Activated CD4-positive, alpha-beta T cell treated with anti-CD3 and anti-CD28 coated beads for 36 hours (primary cell): ENCODE measurements at regions of chr12 and their contacts with region 1.

Region 1: DNA sequence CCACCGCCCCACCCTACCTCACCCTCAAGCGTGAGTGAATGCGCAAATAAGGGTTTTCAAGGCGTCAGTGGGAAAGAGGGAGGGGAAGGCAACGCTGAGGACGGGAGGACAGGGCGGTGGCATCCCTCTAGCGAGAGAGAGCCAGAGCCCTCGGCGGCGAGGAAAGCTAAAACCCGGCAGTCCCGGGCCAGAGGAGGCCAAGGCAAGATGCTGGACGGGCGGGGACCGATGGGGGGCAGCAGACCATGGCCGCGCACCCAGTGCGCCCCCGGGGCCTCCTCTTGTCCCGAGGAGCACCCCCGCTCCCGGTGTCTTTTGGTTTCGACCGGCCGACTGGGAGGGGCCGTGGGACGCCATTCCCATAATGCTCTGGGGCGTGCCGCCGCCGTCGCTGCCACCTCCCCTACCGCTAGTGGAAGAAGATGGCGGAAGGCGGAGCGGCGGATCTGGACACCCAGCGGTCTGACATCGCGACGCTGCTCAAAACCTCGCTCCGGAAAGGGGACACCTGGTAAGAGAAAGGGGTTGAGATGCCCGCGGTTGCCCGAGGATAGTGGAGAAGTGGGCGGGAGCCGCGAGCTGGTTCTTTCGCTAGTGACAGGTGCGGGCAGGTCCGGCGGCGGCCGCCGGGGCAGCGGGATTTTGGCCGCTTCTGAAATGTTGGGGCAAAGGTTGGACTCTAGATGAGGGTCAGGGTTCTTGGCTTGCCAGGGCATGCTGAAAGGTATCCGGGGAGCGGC is at the start of gene USP15:
- DNase-seq: peak; percentile 97
- ATAC-seq: peak; percentile 67
- H3K4me3 Mint-ChIP-seq: peak within 1 kb of the TSS; percentile 87
- H3K27ac Mint-ChIP-seq: peak within 1 kb of the TSS; percentile 100
- H3K4me1 Mint-ChIP-seq: peaks cover 58% of the 10 kb centered on the region
- H3K27me3 Mint-ChIP-seq: no peaks in the 10 kb centered on the region
- total RNA-seq, gene USP15: 87.2 to 98.0 TPM

Region 2: DNA sequence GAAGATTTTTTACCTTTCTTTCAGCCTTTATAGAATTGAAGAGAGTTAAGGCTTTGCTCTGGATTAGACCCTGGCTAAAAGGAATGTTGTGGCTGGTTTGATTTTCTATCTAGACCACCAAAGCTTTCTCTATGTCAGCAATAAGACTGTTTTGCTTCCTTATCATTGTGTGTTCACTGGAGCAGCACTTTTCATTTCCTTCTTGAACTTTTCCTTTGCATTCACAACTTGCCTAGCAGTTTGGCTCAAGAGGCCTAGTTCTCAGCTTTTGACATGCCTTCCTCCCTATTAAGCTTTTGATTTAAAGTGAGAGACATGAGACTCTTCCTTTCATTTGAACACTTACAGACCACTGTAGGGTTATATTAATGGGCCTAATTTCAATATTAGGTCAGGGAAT is 64.0 kb before region 1 on chr12:
- CTCF ChIA-PET with region 1: no interaction called
- POLR2A ChIA-PET with region 1: no interaction called
- intact Hi-C with region 1: no loop called
- DNase-seq: no peak
- ATAC-seq: no peak
- H3K4me3 Mint-ChIP-seq: no peak overlapping the region
- H3K27ac Mint-ChIP-seq: no peak overlapping the region
- H3K4me1 Mint-ChIP-seq: peaks cover 12% of the 10 kb centered on the region
- H3K27me3 Mint-ChIP-seq: peaks cover 16% of the 10 kb centered on the region

Region 3: GRCh38 chr12:62279058-62279457 is 18.9 kb after region 1 on chr12:
- CTCF ChIA-PET with region 1: interaction called, 6 read pairs
- POLR2A ChIA-PET with region 1: no interaction called
- intact Hi-C with region 1: loop called (anchors 2 kb)
- DNase-seq: no peak
- ATAC-seq: peak; percentile 61
- H3K4me3 Mint-ChIP-seq: no peak overlapping the region
- H3K27ac Mint-ChIP-seq: peak overlapping the region; percentile 62
- H3K4me1 Mint-ChIP-seq: peaks cover 78% of the 10 kb centered on the region
- H3K27me3 Mint-ChIP-seq: no peaks in the 10 kb centered on the region

Region 4: DNA sequence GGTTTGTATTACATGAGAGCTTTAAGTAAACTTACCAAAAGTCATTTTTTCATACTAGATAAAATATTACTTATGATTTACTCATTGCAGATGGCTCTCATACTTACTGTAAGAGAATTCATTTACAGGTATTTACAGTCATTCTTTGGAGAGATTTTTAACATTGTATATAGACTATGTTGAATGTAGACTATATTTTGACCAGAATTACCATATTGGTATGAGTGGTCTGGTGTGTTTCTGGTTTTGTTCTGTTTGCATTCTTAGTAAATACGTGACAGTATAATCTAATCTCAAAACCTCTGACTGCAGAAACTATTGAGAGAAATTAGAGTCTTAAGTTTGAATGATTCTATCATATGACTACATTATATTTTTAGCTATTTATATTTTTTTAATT is 91.2 kb after region 1 on chr12:
- CTCF ChIA-PET with region 1: no interaction called
- POLR2A ChIA-PET with region 1: no interaction called
- intact Hi-C with region 1: loop called in 1 of 2 experiments (anchors 2 kb)
- DNase-seq: no peak
- ATAC-seq: peak; percentile 64
- H3K4me3 Mint-ChIP-seq: no peak overlapping the region
- H3K27ac Mint-ChIP-seq: no peak overlapping the region
- H3K4me1 Mint-ChIP-seq: peaks cover 19% of the 10 kb centered on the region
- H3K27me3 Mint-ChIP-seq: no peaks in the 10 kb centered on the region

Region 5: GRCh38 chr12:62363506-62363905 is 103.3 kb after region 1 on chr12:
- CTCF ChIA-PET with region 1: no interaction called
- POLR2A ChIA-PET with region 1: no interaction called
- intact Hi-C with region 1: no loop called
- DNase-seq: no peak
- ATAC-seq: no peak
- H3K4me3 Mint-ChIP-seq: no peak overlapping the region
- H3K27ac Mint-ChIP-seq: no peak overlapping the region
- H3K4me1 Mint-ChIP-seq: peaks cover 23% of the 10 kb centered on the region
- H3K27me3 Mint-ChIP-seq: no peaks in the 10 kb centered on the region

Region 6: DNA sequence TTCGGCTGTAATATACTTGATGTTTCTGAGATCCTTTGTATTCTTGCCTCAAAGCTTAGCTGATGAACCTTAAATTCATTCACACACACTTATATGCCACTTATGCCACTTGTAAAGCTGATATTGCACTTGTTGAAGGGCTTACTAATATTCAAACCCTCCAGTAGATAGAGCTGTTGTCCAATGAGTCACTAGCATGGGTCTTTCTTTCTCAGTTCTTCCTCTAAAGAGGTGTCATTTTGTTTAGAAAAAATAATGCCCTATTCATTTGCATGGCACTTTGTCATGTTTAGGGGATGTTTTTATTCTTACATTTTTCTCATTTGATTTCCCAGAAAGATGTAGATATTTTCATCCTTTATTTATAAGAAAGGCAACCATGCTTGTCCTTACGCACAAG is 262.8 kb after region 1 on chr12:
- CTCF ChIA-PET with region 1: no interaction called
- POLR2A ChIA-PET with region 1: no interaction called
- intact Hi-C with region 1: loop called (anchors 5 to 10 kb)
- DNase-seq: no peak
- ATAC-seq: peak; percentile 91
- H3K4me3 Mint-ChIP-seq: no peak overlapping the region
- H3K27ac Mint-ChIP-seq: no peak overlapping the region
- H3K4me1 Mint-ChIP-seq: peaks cover 49% of the 10 kb centered on the region
- H3K27me3 Mint-ChIP-seq: no peaks in the 10 kb centered on the region

Region 7: DNA sequence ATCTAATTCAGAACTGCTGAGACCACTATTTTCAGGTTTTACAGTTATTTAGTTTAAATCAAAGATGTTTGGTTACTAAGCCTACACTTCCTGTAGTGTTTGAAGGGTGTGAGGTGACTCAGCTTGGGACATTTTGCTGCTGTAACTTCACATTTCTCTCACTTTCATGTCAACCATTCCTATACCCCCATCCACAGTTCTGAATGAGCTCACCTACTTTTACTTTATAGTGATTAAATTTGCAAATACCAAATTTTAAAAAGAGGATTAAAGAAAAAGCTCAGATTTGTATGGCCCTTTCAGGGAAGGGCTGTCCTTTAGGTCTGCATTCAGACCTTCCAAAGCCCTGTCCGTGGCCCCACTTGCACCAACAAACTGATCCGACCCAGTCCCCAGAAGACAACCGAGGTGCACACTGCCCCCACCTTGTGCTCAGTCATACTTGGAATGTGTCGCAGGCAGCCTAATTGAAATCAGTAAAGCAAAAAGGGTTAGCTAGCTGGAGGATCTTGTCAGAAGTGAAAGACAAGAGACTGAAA is 380.8 kb after region 1 on chr12:
- CTCF ChIA-PET with region 1: no interaction called
- POLR2A ChIA-PET with region 1: no interaction called
- intact Hi-C with region 1: loop called in 1 of 2 experiments (anchors 2 kb)
- DNase-seq: peak; percentile 68
- ATAC-seq: peak; percentile 99
- H3K4me3 Mint-ChIP-seq: peak overlapping the region; percentile 53
- H3K27ac Mint-ChIP-seq: peak overlapping the region; percentile 39
- H3K4me1 Mint-ChIP-seq: peaks cover 17% of the 10 kb centered on the region
- H3K27me3 Mint-ChIP-seq: peaks cover 6% of the 10 kb centered on the region

Region 8: DNA sequence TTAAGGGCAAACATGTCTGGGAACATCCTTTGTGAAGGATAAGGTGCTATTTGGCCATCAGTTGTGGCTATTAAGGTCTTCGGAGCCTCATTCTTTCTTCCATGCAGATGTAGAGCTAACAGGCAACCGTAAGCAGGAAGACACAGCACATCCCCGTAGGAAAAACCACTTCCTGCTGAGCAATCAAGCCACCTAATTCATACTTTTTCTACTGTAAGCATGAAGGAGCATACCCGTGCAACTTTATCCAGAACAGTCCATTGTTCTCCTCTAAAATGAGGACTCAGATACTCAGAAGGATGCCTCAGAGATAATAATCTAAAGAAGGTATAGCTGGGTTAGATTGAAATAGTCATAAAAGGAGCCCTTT is 442.8 kb after region 1 on chr12:
- CTCF ChIA-PET with region 1: no interaction called
- POLR2A ChIA-PET with region 1: no interaction called
- intact Hi-C with region 1: no loop called
- DNase-seq: no peak
- ATAC-seq: no peak
- H3K4me3 Mint-ChIP-seq: no peak overlapping the region
- H3K27ac Mint-ChIP-seq: no peak overlapping the region
- H3K4me1 Mint-ChIP-seq: no peaks in the 10 kb centered on the region
- H3K27me3 Mint-ChIP-seq: no peaks in the 10 kb centered on the region

Region 9: DNA sequence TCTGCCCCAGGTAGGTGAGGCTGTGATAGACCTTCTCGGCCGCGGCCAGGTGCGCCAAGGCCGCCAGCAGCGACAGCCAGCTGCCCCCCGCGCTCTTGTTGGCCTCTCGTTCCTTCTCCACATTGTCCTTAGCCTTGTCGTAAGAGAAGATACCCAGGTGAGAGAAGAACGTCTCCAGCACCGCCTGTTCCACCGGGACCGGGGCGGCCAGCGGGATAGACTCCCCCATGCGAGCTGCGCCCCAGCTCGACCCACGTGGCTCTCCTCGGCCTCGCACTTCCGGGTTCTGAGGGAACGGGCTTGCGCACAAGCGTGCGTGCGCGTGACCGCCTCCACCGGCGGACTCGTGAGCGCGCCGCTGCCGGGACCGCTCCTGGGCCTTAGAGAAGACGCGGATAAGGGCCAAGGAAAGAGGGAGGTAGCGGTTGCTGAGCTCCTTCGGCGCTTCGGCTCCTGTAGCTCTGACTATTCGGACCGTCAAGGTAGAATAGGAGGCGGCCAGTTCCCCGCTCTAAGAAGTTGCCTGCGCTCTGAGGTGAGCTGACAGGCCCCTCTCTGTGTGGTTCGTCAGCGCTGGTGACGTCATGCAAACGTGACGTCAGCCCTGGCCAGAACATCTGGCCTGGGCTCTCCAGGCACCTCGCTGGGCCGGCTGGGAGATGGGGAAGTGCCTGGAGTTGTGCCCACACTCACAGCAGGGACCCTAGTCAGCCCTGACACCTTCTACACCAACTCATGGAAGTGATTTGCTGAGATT is 1962.0 kb after region 1 on chr12 and contains the start of gene KICS2:
- CTCF ChIA-PET with region 1: no interaction called
- POLR2A ChIA-PET with region 1: no interaction called
- intact Hi-C with region 1: loop called in 1 of 2 experiments (anchors 5 kb)
- DNase-seq: peak; percentile 95
- ATAC-seq: peak; percentile 92
- H3K4me3 Mint-ChIP-seq: peak within 1 kb of the TSS; percentile 92
- H3K27ac Mint-ChIP-seq: peak within 1 kb of the TSS; percentile 96
- H3K4me1 Mint-ChIP-seq: peaks cover 30% of the 10 kb centered on the region
- H3K27me3 Mint-ChIP-seq: peaks cover 4% of the 10 kb centered on the region
- total RNA-seq, gene KICS2: 15.1 to 16.6 TPM